Activated CD8-positive, alpha-beta T cell treated with anti-CD3 and anti-CD28 coated beads, Interleukin-2, amount 10 ng/mL, durations not matched to agents 7 days and 5 days (primary cell): ENCODE measurements at regions of chr2 and their contacts with region 1.

Region 1: GRCh38 chr2:102005989-102006885 is 14.5 kb downstream of the IL1R2 start:
- DNase-seq: peak; percentile 49
- ATAC-seq: peak; percentile 57
- H3K4me3 Mint-ChIP-seq: no peak overlapping the region
- H3K27ac Mint-ChIP-seq: no peak overlapping the region
- H3K4me1 Mint-ChIP-seq: no peaks in the 10 kb centered on the region
- H3K27me3 Mint-ChIP-seq: peaks cover 2% of the 10 kb centered on the region

Region 2: GRCh38 chr2:101912545-101912944 is 93.7 kb before region 1 on chr2:
- CTCF ChIA-PET with region 1: no interaction called
- POLR2A ChIA-PET with region 1: no interaction called
- DNase-seq: no peak
- ATAC-seq: no peak
- H3K4me3 Mint-ChIP-seq: no peak overlapping the region
- H3K27ac Mint-ChIP-seq: no peak overlapping the region
- H3K4me1 Mint-ChIP-seq: peaks cover 7% of the 10 kb centered on the region
- H3K27me3 Mint-ChIP-seq: peaks cover 8% of the 10 kb centered on the region

Region 3: DNA sequence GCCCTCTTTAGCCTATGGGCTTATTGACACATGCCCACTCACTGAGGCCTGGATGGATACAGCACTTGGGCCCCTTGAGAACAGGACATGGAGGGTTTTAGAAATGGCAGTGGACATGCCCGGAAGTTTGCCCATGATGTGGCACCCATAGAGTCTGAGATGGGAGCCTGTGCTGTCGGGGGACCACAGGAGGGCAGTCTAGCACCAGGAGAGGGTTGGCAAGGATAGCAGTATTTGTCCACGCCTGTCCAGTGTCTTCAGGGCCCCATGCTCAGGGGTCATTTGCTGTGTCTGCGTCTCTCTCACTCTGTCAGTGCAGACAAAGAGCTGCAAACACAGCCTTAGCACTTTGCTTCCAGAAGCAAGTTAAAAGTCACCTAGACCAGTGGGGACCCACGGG is 229.3 kb after region 1 on chr2:
- CTCF ChIA-PET with region 1: interaction called, 77 read pairs
- POLR2A ChIA-PET with region 1: no interaction called
- DNase-seq: peak; percentile 54
- ATAC-seq: no peak
- H3K4me3 Mint-ChIP-seq: no peak overlapping the region
- H3K27ac Mint-ChIP-seq: peak overlapping the region; percentile 13
- H3K4me1 Mint-ChIP-seq: peaks cover 47% of the 10 kb centered on the region
- H3K27me3 Mint-ChIP-seq: no peaks in the 10 kb centered on the region

Region 4: DNA sequence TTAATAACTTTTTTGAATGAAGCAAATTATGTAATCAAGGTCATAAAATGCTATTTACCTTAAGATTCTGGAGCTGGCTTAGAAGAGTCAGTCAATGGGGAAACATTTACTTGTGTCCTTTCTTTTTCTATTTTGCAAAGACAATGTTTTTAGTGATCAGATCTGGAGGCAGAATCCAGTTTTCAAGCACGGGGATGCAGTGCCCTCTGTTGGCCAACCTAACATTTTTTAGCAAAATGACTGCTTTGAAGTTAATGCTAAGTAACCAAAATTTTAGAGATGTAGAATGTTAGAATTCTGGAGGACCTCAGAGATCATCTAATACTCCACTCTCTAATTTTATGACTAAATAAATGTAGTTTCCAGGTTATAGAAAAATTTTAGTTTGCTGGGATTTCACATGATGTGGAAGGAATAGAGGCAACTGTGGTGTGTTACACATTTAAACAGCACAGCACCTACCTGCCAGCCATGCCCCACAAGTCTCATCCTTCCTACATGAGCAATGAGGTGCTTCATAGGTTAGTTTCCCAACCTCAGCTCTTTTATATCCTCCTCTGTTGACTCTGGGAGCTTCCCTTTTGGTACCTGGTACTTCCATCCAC is 443.2 kb after region 1 on chr2:
- CTCF ChIA-PET with region 1: interaction called, 16 read pairs
- POLR2A ChIA-PET with region 1: no interaction called
- DNase-seq: peak; percentile 81
- ATAC-seq: no peak
- H3K4me3 Mint-ChIP-seq: no peak overlapping the region
- H3K27ac Mint-ChIP-seq: peak overlapping the region; percentile 47
- H3K4me1 Mint-ChIP-seq: peaks cover 22% of the 10 kb centered on the region
- H3K27me3 Mint-ChIP-seq: no peaks in the 10 kb centered on the region